AG04449 (cell line): ENCODE measurements at regions of chr1 and their contacts with region 1.

Region 1: GRCh38 chr1:9494929-9495758 is 44.1 kb upstream of the SLC25A33 start:
- DNase-seq: no peak
- H3K4me3 ChIP-seq: peak overlapping the region; percentile 43
- CTCF ChIP-seq: peak; percentile 91

Region 2: GRCh38 chr1:9280015-9280860 is 214.9 kb before region 1 on chr1:
- CTCF ChIA-PET with region 1: interaction called, 23 read pairs
- POLR2A ChIA-PET with region 1: interaction called, 3 read pairs
- DNase-seq: no peak
- H3K4me3 ChIP-seq: peak overlapping the region; percentile 20
- CTCF ChIP-seq: no peak

Region 3: GRCh38 chr1:9350013-9350908 is 144.9 kb before region 1 on chr1:
- CTCF ChIA-PET with region 1: no interaction called
- POLR2A ChIA-PET with region 1: no interaction called
- DNase-seq: no peak
- H3K4me3 ChIP-seq: no peak overlapping the region
- CTCF ChIP-seq: no peak

Region 4: DNA sequence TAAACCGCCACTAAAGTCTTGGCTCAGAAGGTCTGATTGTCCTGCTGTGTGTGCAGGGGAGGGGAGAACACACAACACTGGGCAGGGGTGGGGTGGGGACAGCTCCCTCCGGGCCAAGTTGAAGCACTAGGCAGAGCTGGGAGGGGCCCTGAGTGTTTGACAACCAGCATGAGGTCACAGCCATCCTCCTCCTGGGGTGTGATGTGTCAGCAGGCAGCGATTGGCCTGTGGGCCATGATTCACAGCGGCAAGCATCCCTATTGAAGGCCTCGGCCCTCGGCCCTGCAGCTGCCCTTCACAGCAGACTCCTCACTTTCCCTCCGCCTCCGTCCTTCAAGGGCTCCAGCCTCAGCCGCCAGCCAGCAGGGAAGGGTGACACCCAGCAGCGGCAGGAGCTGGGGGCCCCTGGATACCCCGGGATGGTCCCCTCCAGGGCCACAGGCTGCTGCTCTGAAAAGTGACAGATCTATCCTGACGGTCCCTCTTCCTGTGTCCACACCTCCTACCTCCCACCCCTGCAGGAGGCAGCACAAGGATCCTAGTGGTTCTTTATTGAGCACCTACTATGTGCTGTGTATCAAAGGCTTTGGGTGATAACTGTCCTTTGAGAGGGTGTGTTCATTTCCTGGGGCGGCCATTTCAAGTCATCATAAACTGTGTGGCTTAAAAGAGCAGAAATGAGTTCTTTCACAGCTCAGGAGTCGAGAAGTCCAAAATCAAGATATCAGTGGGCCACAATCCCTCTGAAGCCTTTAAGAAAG is 21.9 kb before region 1 on chr1:
- CTCF ChIA-PET with region 1: interaction called, 30 read pairs
- POLR2A ChIA-PET with region 1: no interaction called
- DNase-seq: peak; percentile 63
- H3K4me3 ChIP-seq: no peak overlapping the region
- CTCF ChIP-seq: no peak

Region 5: DNA sequence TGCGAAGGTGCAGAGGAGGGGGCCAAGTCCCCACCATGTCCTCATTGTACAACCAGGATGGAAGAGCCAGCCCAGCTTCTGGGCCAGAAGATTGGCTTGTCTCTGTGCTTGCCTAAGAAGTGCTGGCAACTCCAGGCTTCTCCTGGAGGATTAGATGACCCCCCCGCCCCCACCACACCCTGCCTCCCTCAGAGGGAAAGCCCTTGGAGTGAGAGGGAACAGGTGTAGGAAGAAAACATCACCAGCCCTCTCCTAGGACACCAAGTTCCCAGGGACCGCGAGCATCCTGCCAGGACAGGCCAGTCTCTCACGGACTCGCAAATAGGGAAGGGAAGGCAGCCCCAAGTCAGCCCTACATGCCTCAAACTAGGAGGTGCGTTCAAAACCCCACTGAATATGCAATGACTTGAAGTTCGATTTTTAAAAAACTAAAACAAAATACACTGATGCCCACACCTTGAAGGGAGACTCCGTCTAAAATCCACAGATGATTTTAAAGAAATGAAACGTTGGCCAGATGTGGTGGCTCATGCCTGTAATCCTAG is 23.4 kb after region 1 on chr1:
- CTCF ChIA-PET with region 1: interaction called, 11 read pairs
- POLR2A ChIA-PET with region 1: no interaction called
- DNase-seq: no peak
- H3K4me3 ChIP-seq: no peak overlapping the region
- CTCF ChIP-seq: no peak

Region 6: DNA sequence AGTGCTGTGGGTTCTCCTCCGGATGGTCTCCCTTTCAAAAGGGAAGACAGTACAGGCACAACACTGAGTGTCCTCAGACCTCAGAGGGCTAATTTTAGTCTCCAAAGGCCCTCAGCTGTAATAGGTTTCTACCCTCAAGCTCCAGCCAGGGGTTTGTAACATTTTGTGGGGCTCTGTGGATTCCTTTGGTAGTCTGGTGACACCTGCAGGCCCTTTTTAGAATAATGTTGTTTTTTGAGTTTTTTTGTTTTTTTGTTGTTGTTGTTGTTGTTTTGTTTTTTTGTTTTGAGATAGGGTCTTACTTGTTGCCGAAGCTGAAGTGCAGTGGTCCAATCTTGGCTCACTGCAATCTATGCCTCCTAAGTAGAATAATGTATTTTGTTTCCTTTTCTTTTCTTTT is 78.6 kb after region 1 on chr1:
- CTCF ChIA-PET with region 1: interaction called, 148 read pairs
- POLR2A ChIA-PET with region 1: no interaction called
- DNase-seq: no peak
- H3K4me3 ChIP-seq: no peak overlapping the region
- CTCF ChIP-seq: no peak